ENCODE measurements at regions of chr7 and their contacts with region 1.

Region 1: DNA sequence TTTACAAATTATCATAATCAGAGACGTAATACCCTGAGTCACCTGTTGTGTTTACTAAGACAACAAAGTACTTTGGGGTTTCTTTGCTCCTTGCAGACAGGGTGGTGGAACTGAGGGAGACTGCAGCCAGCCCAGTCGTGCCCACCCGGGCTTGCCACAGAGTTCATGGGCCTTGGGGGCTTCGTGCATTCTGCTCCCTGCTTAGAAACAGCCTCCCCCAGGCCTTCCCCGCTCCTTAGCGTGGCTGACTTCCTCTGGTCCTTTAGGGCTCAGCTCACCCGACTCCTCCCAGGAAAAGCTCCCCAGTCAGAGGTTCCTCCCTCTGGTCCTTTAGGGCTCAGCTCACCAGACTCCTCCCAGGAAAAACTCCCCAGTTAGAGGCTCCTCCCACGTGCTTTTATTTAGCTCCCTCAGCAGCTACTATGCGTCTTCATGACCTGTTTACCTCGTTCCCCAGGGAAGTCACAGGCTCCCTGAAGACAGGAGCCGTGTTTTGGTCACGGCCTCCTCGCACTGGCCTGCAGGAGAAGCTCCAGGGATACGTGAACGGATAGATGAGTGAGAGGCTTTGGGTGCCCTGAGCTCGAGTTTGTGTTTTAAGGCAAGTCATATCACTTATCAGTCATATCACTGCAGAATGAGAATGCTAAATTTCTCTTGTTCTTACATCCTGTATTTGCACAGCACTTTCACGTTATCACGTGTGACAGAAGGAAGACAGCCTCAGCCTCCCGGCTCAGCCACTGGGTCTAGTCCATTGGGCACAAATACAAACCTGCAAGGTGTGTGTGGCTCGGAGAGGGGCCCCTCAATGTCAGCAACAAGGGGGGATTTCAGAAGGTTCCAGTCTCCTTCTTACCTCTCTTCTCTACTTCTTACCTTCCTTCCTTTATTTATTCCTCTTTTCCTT is 52.7 kb upstream of the VIPR2 start:
- DNase-seq: peak; percentile 74
- H3K4me3 Mint-ChIP-seq: peak overlapping the region; percentile 70
- H3K27ac Mint-ChIP-seq: peak overlapping the region; percentile 98
- H3K4me1 Mint-ChIP-seq: peaks cover 38% of the 10 kb centered on the region
- H3K27me3 Mint-ChIP-seq: no peaks in the 10 kb centered on the region

Region 2: DNA sequence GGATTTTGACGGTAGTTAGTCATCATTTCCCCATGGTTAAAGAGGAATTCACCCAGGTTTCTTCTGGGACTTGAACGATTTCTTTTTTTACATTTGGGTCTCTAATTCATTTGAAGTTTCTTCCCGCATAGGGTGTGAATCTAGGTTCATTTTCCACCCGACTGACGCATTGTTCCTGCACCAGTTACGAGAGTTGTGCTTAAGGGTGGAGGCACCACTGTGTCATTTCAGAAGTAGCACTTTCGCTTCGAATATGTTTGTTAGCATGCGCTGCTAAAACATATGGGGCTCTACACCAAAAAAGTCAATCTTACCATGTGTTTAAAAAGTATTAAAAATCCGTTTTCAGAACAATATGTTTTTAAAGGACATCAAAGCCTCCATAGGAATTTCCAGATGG is 192.9 kb before region 1 on chr7:
- CTCF ChIA-PET with region 1: no interaction called
- POLR2A ChIA-PET with region 1: no interaction called
- intact Hi-C with region 1: loop called (anchors 2 kb)
- DNase-seq: peak; percentile 75
- H3K4me3 Mint-ChIP-seq: no peak overlapping the region
- H3K27ac Mint-ChIP-seq: peak overlapping the region; percentile 68
- H3K4me1 Mint-ChIP-seq: peaks cover 29% of the 10 kb centered on the region
- H3K27me3 Mint-ChIP-seq: peaks cover 12% of the 10 kb centered on the region

Region 3: GRCh38 chr7:159143780-159144757 is 53.3 kb before region 1 on chr7:
- CTCF ChIA-PET with region 1: no interaction called
- POLR2A ChIA-PET with region 1: interaction called, 3 read pairs
- intact Hi-C with region 1: loop called (anchors 2 kb)
- DNase-seq: peak; percentile 51
- H3K4me3 Mint-ChIP-seq: peak overlapping the region; percentile 46
- H3K27ac Mint-ChIP-seq: no peak overlapping the region
- H3K4me1 Mint-ChIP-seq: peaks cover 4% of the 10 kb centered on the region
- H3K27me3 Mint-ChIP-seq: peaks cover 33% of the 10 kb centered on the region

Region 4: DNA sequence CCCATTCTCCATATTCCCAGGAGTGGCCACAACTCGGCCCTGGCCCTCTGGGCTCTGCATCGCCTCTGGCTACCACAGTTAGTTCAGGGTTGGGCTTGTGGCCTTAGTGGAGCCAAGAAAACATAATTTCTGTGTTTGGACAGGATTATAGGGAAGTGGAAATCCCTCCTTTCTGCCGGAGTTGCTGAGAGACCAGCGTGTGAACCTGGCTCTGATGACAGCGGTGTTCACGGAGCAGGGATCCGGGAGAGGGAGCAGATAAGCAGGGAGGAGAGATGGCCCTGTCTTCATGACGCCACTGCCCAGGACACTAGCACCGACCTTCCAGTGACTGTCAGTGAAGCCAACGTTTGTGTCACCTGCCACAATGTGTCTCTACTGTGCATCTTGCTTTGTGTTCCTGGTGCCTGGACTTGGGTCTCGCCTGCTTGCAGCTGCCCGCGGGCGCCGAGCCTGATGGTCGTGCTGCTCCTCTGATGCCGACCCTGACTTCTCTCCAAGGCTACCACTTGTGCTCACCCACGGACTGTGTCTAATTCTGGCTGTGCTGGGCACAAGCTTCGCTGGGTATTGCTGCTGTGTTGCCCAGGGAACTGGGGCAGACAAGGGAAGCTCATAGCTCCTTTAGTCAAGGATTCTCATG is 14.3 kb after region 1 on chr7:
- CTCF ChIA-PET with region 1: no interaction called
- POLR2A ChIA-PET with region 1: no interaction called
- intact Hi-C with region 1: no loop called
- DNase-seq: no peak
- H3K4me3 Mint-ChIP-seq: no peak overlapping the region
- H3K27ac Mint-ChIP-seq: no peak overlapping the region
- H3K4me1 Mint-ChIP-seq: peaks cover 2% of the 10 kb centered on the region
- H3K27me3 Mint-ChIP-seq: no peaks in the 10 kb centered on the region

Measured in activated CD4-positive, alpha-beta memory T cell treated with anti-CD3 and anti-CD28 coated beads for 36 hours (primary cell).